ENCODE measurements at regions of chr19 and their contacts with region 1.

Region 1: GRCh38 chr19:17470068-17470841 is at the start of gene SLC27A1:
- DNase-seq: peak; percentile 96 to 97
- H3K4me3 ChIP-seq: peak within 1 kb of the TSS; percentile 70 to 84 (median 79)
- H3K27ac ChIP-seq: no peak within 1 kb of the TSS
- H3K4me1 ChIP-seq: peaks cover 0 to 20% (median 8%) of the 10 kb centered on the region in 4 experiments; a peak in 5 of 7 replicates
- H3K27me3 ChIP-seq: peaks cover 0 to 11% (median 5%) of the 10 kb centered on the region in 4 experiments; a peak in 3 of 7 replicates
- CTCF ChIP-seq: no peak
- EP300 ChIP-seq: no peak
- POLR2A ChIP-seq: peak in 1 of 2 experiments; percentile 54; a peak in 1 of 3 replicates
- RAD21 ChIP-seq: no peak
- total RNA-seq, gene SLC27A1: 7.3 and 7.5 TPM in 2 replicates

Region 2: DNA sequence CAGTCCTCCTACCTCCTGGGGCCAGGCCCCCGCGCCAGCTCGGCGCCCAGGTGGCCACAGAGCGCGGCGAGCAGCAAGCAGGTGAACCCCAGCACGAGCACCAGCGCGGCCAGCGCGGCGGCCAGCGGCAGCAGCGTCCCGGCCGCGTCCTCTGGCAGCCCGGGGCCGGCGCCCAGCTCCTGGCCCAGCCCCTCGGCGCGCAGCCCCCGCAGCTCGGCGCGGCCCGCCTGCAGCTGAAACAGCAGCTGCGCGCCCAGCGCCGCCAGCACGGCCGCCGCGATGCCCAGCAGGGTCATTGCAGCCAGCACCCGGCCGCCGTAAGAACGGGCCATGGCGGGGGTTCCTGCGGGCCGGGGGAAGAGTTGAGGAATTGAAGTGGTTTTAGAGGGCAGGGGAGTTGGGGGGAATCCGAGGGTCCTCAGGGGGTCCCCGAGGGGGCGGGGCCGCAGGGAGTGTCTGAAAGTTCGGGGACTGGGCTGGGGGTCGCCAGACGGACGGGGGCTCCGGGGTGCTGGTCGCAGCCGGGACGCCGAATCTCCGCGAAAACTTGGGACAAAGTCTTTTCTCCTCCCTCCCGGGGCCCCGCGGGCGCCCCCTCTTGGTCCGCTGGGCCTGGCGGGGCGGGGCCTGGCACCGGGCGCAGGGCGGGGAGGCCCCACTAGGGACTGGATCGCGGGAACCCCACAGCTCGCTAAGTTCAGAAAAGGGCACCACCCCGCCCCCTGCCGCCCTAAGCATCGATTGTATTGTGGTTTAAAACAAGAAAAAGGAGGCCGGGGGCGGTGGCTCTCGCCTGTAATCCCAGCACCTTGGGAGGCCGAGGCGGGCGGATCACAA is 21.9 kb before region 1 on chr19 and contains the start of gene TMEM221:
- CTCF ChIA-PET with region 1: interaction called, 14 read pairs
- POLR2A ChIA-PET with region 1: interaction called, 4 read pairs
- DNase-seq: peak in 1 of 2 experiments; percentile 89
- H3K4me3 ChIP-seq: peak within 1 kb of the TSS; percentile 40 to 94 (median 48)
- H3K27ac ChIP-seq: no peak within 1 kb of the TSS
- H3K4me1 ChIP-seq: peaks cover 0 to 2% (median under 1%) of the 10 kb centered on the region in 4 experiments; a peak in 1 of 7 replicates
- H3K27me3 ChIP-seq: peaks cover 0 to 16% (median 10%) of the 10 kb centered on the region in 4 experiments; a peak in 6 of 7 replicates
- CTCF ChIP-seq: peak; percentile 39 to 60 (median 54)
- EP300 ChIP-seq: no peak
- POLR2A ChIP-seq: peak in 1 of 2 experiments; percentile 57; a peak in 1 of 3 replicates
- RAD21 ChIP-seq: peak in 1 of 2 experiments; percentile 19; a peak in 1 of 4 replicates
- total RNA-seq, gene TMEM221: 1.4 and 1.6 TPM in 2 replicates

Region 3: GRCh38 chr19:17455308-17456123 is 14.7 kb before region 1 on chr19:
- CTCF ChIA-PET with region 1: interaction called, 27 read pairs
- POLR2A ChIA-PET with region 1: interaction called, 13 read pairs
- DNase-seq: peak in 1 of 2 experiments; percentile 67
- H3K4me3 ChIP-seq: peak overlapping the region in 2 of 4 experiments; percentile 9 to 38; a peak in 3 of 8 replicates
- H3K27ac ChIP-seq: no peak overlapping the region
- H3K4me1 ChIP-seq: peaks cover 0 to 9% (median 4%) of the 10 kb centered on the region in 4 experiments; a peak in 5 of 7 replicates
- H3K27me3 ChIP-seq: peaks cover 6 to 27% (median 22%) of the 10 kb centered on the region in 4 experiments
- CTCF ChIP-seq: no peak
- EP300 ChIP-seq: no peak
- POLR2A ChIP-seq: no peak
- RAD21 ChIP-seq: no peak

Region 4: DNA sequence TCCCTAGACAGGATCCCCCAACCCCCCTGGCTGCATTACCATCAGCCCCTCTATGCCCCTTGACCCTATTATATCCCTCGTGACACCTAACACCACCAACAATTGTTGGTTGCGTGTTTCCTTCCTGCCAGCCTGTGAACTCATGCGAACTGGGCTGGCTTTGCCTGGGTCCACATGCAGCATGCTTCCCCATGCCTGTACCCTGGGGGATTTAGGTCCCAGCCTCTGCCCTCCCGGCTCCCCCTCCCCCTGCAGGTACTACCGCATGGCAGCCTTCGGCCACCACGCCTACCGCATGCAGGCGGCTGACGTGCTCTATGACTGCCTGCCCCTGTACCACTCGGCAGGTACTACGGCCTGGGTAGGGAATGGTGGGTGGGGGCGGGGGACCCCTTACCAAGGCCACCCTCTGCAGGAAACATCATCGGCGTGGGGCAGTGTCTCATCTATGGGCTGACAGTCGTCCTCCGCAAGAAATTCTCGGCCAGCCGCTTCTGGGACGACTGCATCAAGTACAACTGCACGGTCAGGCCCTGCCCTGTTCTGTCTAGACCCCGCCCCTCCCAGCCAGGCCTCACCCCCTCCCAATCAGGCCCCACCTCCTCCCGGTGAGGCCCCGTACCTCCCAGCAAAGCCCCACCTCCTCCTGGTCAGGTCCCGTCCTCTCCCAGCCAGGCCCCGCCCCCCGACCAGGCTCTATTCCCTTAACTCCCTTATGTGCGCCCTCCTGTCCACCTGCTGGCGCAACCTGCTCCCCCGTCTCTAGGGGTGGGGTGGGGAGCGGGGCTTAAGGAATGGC is 18.5 kb after region 1 on chr19:
- CTCF ChIA-PET with region 1: interaction called, 39 read pairs
- POLR2A ChIA-PET with region 1: interaction called, 11 read pairs
- DNase-seq: peak; percentile 96 to 97
- H3K4me3 ChIP-seq: peak overlapping the region; percentile 14 to 65 (median 50); a peak in 7 of 8 replicates
- H3K27ac ChIP-seq: no peak overlapping the region
- H3K4me1 ChIP-seq: peaks cover 0 to 19% (median 15%) of the 10 kb centered on the region in 4 experiments; a peak in 6 of 7 replicates
- H3K27me3 ChIP-seq: no peaks in the 10 kb centered on the region
- CTCF ChIP-seq: peak; percentile 71 to 86 (median 84)
- EP300 ChIP-seq: no peak
- POLR2A ChIP-seq: peak; percentile 29 to 71; a peak in 2 of 3 replicates
- RAD21 ChIP-seq: peak; percentile 48 to 58